Activated B cell treated with CpG ODN at 0.5 μM for 24 hours (primary cell): ENCODE measurements at regions of chr5 and their contacts with region 1.

Region 1: DNA sequence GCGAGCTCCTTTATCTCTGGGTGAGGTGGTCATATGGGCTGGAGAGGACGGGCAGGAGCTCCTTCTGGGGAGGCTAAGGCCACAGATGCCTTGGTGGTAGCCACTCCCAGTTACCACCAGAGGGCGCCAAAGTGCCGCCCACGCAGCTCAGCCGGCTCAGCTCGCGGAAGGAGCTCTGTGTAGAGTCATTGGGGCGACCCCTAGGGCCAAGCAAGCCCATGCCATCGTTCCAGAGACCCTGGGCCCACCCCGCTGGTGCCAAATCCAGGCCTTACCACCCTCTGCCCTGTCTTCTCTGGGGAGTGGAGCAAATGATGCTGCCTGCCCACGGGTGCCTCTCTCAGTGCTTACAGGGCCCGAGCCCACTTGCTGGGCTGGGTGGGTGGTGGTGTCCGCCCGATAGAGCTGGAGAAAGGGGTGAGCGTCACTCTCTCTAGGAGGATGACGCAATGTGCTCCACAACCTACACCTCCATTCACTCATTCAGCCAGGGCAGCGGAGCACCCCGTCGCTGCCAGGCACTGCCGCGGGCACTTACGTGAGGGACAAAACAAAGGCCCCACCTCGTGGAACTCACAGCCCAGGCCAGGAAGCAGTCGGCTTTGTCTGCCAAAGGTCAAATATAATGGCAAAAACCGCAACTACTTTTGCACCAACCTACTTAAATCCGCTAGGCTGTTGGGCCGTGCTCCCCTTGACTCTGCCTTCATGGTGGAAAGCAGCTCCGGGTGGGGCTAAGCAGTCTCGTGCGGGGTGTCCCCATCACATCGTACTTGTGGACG is 13.8 kb downstream of the TSPAN17 start:
- DNase-seq: peak; percentile 72
- ATAC-seq: peak; percentile 84
- H3K4me3 Mint-ChIP-seq: no peak overlapping the region
- H3K27ac Mint-ChIP-seq: no peak overlapping the region
- H3K4me1 Mint-ChIP-seq: peaks cover 29% of the 10 kb centered on the region
- H3K27me3 Mint-ChIP-seq: peaks cover 18% of the 10 kb centered on the region
- CTCF ChIP-seq: no peak

Region 2: DNA sequence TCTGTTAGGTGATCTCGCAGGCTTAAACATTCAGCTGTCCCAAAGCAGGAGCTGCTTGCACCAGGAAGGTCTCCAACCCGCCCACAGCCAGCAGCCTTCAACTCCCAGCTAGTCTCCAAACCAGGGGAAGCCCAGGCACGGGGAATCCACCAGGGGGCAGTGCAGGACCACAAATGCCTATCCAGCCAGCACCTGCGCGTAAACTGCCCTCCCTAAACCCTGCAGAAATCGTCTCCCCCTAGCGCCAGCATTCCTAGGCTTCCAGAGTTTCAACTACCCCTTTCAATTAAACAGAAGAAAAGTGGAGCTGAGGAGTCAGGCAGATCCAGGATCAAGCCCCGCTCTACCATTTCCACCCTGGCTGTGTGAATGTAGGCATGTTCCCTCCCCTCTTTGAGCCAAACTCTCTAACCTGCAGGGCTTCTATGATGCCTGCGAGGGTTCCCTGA is 931.2 kb before region 1 on chr5:
- CTCF ChIA-PET with region 1: interaction called, 9 read pairs
- POLR2A ChIA-PET with region 1: no interaction called
- intact Hi-C with region 1: loop called (anchors 2 kb)
- DNase-seq: peak; percentile 74
- ATAC-seq: peak; percentile 71
- H3K4me3 Mint-ChIP-seq: no peak overlapping the region
- H3K27ac Mint-ChIP-seq: no peak overlapping the region
- H3K4me1 Mint-ChIP-seq: peaks cover 5% of the 10 kb centered on the region
- H3K27me3 Mint-ChIP-seq: peaks cover 46% of the 10 kb centered on the region
- CTCF ChIP-seq: no peak

Region 3: DNA sequence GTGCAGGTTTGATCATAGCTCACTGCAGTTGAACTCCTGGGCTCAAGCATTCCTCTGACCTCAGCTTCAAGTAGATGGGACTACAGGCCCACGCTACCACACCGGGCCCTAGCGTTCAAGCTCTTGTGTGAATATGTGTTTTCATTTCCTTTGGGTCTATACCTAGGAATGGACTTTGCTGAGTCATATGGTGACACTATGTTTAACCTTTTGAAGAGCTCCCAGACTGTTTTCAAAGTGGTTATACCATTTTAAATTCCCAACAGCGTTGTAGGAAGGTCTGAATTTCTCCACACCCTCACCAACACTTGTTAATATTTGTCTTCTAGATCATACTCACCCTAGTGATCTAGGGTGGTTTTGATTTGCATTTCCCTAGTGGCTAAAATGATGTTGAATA is 179.3 kb before region 1 on chr5:
- CTCF ChIA-PET with region 1: no interaction called
- POLR2A ChIA-PET with region 1: no interaction called
- intact Hi-C with region 1: no loop called
- DNase-seq: no peak
- ATAC-seq: no peak
- H3K4me3 Mint-ChIP-seq: no peak overlapping the region
- H3K27ac Mint-ChIP-seq: no peak overlapping the region
- H3K4me1 Mint-ChIP-seq: peaks cover 2% of the 10 kb centered on the region
- H3K27me3 Mint-ChIP-seq: no peaks in the 10 kb centered on the region
- CTCF ChIP-seq: no peak

Region 4: DNA sequence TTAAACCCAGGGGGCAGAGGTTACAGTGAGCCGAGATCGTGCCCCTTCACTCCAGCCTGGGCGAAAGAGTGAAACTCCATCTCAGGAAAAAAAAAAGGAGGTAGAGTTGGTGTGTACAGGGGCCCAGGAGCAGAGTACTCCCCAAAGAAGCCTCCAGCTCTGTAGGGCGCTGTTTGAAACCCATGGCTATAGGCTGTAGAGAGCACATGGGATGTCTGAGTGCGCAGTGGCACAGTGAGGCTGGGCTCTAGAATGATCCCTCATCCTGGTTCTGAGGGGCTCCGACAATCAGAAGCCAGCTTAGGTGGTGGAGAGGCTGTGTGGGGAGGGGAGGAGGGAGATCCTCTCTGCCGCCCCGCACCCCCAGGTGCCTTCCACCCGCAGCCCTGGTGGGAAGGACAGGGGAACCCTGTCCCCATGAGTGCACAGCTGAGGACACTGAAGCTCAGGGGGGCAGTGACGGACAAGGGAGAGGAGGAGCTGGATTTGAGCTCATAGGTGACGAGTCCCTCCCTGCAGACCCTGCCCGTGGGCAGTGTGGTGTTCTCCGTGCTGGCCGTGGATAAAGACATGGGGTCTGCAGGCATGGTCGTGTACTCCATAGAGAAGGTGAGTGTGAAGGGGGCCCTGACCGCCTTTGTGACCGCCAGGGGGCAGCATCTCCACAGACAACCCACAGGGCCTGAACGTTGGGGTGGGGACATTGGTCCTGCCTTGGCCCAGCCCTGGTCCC is 87.3 kb before region 1 on chr5:
- CTCF ChIA-PET with region 1: interaction called, 8 read pairs
- POLR2A ChIA-PET with region 1: no interaction called
- intact Hi-C with region 1: loop called (anchors 1 kb)
- DNase-seq: peak; percentile 75
- ATAC-seq: peak; percentile 86
- H3K4me3 Mint-ChIP-seq: no peak overlapping the region
- H3K27ac Mint-ChIP-seq: no peak overlapping the region
- H3K4me1 Mint-ChIP-seq: peaks cover 13% of the 10 kb centered on the region
- H3K27me3 Mint-ChIP-seq: peaks cover 8% of the 10 kb centered on the region
- CTCF ChIP-seq: peak; percentile 34

Region 5: GRCh38 chr5:176647030-176647866 is 13.8 kb before region 1 on chr5 and contains the start of gene TSPAN17:
- CTCF ChIA-PET with region 1: interaction called, 62 read pairs
- POLR2A ChIA-PET with region 1: interaction called, 11 read pairs
- intact Hi-C with region 1: loop called (anchors 1 kb)
- DNase-seq: peak; percentile 99
- ATAC-seq: peak; percentile 97
- H3K4me3 Mint-ChIP-seq: peak within 1 kb of the TSS; percentile 90
- H3K27ac Mint-ChIP-seq: peak within 1 kb of the TSS; percentile 91
- H3K4me1 Mint-ChIP-seq: peaks cover 45% of the 10 kb centered on the region
- H3K27me3 Mint-ChIP-seq: no peaks in the 10 kb centered on the region
- CTCF ChIP-seq: no peak
- total RNA-seq, gene TSPAN17: 20.7 and 27.7 TPM in 2 replicates

Region 6: DNA sequence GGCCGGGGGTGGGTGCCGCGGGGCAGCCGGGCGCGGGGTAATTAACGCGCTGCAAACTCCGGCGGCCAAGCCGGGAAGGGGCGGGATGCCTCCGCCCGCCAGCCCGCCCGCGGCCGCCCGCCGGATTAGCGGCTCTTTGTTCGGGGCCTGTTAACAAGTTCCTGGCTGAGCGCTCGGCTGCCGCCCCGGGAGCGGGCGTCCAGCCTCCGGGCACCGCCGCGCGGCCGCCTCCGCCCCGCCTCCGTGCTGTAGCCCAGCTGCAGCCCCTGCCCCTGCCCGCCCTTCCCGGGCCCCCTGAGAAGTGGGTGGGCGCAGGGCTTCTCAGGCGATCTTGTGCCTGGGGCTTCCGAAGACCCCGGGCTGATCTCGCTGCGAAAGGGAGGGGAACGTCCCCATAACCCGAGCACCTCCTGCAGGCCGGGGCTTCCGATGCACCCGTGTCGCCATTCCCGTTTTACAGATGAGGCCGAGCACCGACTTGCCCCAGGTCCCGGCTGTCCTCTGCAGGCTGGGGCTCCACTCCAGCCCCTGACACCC is 156.9 kb after region 1 on chr5:
- CTCF ChIA-PET with region 1: interaction called, 4 read pairs
- POLR2A ChIA-PET with region 1: no interaction called
- intact Hi-C with region 1: loop called (anchors 5 kb)
- DNase-seq: no peak
- ATAC-seq: peak; percentile 25
- H3K4me3 Mint-ChIP-seq: peak overlapping the region; percentile 55
- H3K27ac Mint-ChIP-seq: no peak overlapping the region
- H3K4me1 Mint-ChIP-seq: peaks cover 10% of the 10 kb centered on the region
- H3K27me3 Mint-ChIP-seq: peaks cover 75% of the 10 kb centered on the region
- CTCF ChIP-seq: no peak

Region 7: DNA sequence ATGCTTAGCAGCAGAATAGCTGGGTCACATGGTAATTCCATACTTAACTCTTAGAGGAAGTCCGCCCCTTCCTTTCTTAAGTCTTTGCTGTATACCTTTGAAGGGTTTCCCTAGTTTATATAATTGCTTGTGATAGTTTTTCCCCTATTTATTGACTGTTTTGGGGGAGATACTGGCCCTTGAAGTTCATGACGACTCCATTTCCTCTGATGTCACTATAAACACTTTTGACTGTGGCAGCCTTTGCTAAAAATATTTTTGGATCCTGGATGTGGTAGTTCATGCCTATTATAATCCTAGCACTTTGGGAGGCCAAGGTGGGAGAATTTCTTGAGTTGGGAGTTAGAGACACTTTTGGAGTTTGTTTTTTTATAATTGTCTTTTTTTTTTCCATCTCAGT is 510.9 kb after region 1 on chr5:
- CTCF ChIA-PET with region 1: no interaction called
- POLR2A ChIA-PET with region 1: no interaction called
- intact Hi-C with region 1: no loop called
- DNase-seq: no peak
- ATAC-seq: no peak
- H3K4me3 Mint-ChIP-seq: no peak overlapping the region
- H3K27ac Mint-ChIP-seq: peak overlapping the region; percentile 56
- H3K4me1 Mint-ChIP-seq: peaks cover 37% of the 10 kb centered on the region
- H3K27me3 Mint-ChIP-seq: no peaks in the 10 kb centered on the region
- CTCF ChIP-seq: no peak